ENCODE measurements at regions of chr11 and their contacts with region 1.

Region 1: DNA sequence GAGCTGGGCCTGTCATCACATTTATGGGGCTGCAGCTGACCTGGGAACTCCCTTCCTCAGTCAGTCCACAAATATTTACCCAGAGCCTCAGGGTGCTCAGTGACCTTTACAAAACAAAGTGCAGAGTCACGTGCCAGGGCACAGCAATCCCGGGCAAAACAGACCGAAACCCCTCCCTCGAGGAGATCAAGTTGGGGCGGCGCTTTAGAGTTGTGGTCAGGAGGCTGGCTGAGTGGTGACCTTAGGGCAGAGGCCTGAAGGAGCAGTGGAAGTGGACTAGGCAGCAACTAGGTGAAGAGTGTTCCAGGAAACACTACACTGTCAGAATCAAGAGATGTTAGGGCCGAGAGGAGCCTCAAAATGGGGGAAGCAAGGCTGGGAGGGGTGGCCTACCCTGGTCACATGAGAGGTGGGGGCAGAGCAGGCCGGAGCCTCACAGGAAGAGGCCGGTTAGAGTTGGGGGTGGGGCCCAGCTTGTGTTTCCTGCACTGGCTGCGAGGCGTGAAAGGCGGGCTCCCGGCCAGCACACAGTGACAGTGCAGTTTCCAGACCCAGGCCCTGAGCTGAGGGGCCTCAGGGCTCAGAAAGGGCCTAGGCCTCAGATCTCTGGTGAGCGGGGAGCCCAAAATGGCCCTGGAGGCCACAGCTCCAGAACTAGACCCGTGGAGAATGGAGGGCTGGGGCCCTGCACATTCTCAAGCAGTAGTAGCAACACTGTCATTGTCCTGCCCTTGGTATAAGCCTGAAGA is 3.7 kb upstream of the NEAT1 start:
- DNase-seq: peak; percentile 84 to 98 (median 90)

Region 2: DNA sequence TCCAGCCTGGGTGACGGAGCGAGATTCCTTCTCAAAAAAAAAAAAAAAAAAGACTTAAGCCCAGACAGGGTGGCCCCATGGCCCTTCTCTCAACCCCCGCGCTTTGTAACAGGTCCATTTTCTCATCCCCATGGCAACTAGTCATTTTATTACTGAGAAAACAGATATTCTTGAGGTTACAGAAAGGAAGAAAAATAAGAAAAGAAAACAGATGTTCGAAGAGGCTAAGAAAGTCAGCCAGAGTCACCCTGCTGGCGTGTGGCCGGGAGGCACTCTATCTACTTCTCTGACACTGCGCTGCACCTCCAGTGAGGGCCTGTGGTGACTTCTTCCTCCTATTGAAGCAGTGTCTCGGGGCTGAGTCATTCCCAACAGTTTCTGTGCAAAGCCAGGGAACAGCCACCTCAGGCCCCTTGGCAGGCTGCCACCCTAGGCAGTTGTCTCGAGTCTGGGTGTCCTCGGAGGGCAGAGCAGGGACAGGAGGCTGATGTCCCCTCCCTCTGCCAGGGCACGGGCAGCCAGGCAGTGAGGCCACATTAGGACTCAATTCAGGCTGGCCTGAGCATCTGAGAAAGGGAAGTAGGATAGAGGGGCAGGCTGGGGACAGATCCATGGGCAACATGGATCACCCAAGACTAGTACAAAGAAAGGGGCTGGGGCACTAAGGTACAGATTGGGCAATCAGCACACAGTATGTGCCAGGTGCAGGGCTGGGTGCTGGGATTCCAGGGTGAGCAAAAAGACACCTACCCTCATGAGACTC is 268.2 kb before region 1 on chr11:
- intact Hi-C with region 1: no loop called
- DNase-seq: peak in 9 of 10 donors; percentile 36 to 92 (median 60)

Region 3: DNA sequence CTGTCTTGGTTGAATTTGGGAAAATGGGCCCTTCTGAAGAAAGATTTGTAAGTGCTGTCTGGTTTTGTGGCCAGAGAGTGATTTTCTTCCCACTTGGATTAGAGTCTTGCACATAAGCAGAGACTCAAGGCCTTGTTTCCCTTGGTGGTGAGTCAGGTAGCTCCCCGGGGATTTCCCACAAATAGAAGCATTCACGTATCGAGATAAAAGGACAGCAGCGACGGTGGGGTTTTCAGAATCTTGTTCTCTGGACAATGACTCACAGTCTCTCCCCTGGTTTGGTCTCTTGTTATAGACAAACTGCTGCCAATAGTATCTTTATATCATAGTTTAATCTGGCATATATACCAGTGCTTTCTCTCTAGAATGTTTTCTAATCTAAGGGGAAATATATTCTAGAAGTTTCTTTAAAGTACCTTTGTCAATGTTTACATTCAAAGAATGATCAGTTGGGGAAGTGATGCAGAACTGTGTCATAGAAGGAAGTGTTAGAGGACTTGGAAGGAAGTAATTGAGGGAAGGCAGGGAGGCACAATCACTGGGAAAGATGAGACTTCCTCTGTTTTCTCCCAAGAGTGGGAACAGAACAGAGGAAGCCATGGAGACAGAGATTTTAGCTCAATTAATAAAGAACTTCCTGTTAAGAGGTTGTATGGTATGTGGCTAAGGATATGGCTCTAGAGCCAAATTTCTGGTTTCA is 139.0 kb before region 1 on chr11:
- intact Hi-C with region 1: no loop called
- DNase-seq: no peak

Region 4: GRCh38 chr11:65366340-65366773 is 52.5 kb before region 1 on chr11:
- intact Hi-C with region 1: loop called (anchors 10 kb)
- DNase-seq: peak in 1 of 10 donors; percentile 27

Region 5: DNA sequence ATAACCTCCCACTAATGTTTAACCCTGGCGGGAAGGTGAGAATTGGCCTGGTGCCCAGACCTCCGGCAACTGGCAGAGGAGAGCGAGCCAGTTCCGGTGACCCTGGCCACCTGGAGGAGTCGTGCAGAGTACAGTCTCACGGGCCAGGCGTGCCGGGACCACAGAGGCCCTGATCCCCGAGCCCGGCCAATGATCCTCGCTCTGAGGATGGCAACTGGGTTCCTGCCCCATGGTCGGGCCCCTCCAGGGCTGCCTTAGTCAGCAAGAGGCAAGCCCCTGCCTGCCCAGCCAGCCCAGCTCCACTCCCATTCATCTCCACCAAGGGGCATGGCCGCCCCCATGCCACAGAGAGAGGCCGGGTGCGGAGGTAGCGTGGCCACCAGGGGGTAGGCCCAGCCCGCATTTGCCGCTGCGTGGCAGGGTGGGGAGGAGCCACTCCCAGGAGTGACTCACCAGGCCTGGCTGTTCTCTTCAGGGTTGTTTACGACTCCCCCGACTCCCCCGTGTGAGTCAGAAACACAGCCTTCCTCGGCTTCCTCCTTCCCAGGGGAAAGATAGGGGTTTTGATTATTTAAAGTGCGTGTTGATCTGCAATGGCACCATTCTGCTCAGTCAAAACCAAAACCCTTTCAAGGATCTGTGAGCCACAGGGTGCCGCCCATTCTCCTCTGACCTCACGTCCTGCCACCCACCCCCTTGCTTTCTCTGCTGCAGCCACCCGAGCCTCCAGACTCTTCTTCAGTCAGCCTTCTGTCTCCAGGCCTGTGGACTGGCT is 36.7 kb before region 1 on chr11 and contains the start of gene SLC25A45:
- intact Hi-C with region 1: loop called (anchors 5 kb)
- DNase-seq: peak; percentile 73 to 98 (median 84)

Region 6: GRCh38 chr11:65477149-65477965 is 58.5 kb after region 1 on chr11:
- intact Hi-C with region 1: loop called (anchors 2 kb)
- DNase-seq: peak; percentile 93 to 99 (median 96)

Region 7: GRCh38 chr11:65497141-65498041 is 78.5 kb after region 1 on chr11:
- intact Hi-C with region 1: loop called (anchors 1 kb)
- DNase-seq: peak; percentile 94 to 99 (median 97)

Region 8: DNA sequence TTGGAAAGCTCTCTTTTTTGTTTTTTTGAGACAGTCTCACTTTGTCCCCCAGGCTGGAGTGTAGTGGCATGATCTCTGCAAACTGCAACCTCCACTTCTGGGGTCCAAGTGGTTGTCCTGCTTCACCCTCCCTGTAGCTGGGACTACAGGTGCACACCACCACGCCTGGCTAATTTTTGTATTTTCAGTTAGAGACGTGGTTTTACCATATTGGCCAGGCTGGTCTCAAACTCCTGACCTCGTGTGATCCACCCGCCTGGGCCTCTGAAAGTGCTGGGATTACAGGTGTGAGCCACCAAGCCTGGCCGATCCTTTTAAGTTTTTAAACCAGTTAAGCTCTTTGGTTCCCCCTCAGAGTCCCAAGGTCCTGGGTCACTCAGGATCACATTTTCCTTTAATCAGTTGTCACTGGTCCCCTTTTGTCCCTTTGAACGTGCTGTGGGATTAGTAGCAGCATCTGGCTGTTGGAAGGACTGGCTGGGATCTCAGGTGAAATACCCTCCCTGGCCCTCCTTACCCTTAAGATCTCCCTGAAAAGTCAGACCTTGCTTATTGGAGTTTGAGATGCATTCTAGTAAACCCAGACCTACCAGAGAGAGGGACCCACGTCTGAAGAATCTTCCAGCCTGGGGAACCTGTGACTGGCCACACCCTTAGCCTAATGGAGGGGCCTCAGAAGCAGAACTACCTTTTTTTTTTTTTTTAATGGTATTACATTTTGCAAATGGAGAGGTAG is 88.1 kb after region 1 on chr11:
- intact Hi-C with region 1: loop called (anchors 1 kb)
- DNase-seq: peak in 4 of 10 donors; percentile 26 to 75 (median 46)

Measured in posterior cingulate gyrus (tissue), 11 donors.